ENCODE measurements at regions of chr11 and their contacts with region 1.

Region 1: GRCh38 chr11:61627567-61628445 is 46.9 kb upstream of the SYT7 start:
- DNase-seq: peak; percentile 81
- H3K4me3 Mint-ChIP-seq: no peak overlapping the region
- H3K27ac Mint-ChIP-seq: peak overlapping the region; percentile 54
- H3K4me1 Mint-ChIP-seq: peaks cover 25% of the 10 kb centered on the region
- H3K27me3 Mint-ChIP-seq: peaks cover 15% of the 10 kb centered on the region
- CTCF ChIP-seq: peak; percentile 80

Region 2: DNA sequence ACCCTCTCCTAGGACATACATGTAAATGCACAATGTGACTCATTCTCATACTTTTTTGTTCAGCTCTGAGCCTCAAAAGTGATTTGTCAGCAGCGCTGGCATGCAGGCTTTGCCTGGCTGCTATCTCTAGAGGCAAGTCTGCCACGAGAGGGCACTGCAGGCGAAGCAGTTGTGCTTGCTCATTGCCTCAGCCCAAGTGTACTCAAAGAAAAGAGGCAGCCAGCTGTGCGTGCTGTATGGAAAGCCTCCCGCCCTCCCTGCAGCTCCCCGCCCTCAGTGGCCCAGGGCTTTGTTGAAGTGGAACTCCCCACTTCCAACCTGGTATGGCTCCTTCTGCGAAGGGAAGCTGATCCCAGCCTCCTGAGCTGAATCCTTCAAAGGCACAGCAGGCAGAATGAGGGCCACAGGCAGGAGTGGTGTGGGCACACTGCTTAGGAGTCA is 181.6 kb before region 1 on chr11:
- CTCF ChIA-PET with region 1: interaction called, 3 read pairs
- intact Hi-C with region 1: loop called (anchors 2 kb)
- DNase-seq: peak; percentile 88
- H3K4me3 Mint-ChIP-seq: no peak overlapping the region
- H3K27ac Mint-ChIP-seq: no peak overlapping the region
- H3K4me1 Mint-ChIP-seq: no peaks in the 10 kb centered on the region
- H3K27me3 Mint-ChIP-seq: no peaks in the 10 kb centered on the region
- CTCF ChIP-seq: peak; percentile 89

Region 3: GRCh38 chr11:61477727-61478148 is 150.1 kb before region 1 on chr11:
- CTCF ChIA-PET with region 1: no interaction called
- intact Hi-C with region 1: loop called (anchors 1 kb)
- DNase-seq: peak; percentile 60
- H3K4me3 Mint-ChIP-seq: no peak overlapping the region
- H3K27ac Mint-ChIP-seq: no peak overlapping the region
- H3K4me1 Mint-ChIP-seq: peaks cover 21% of the 10 kb centered on the region
- H3K27me3 Mint-ChIP-seq: peaks cover under 1% of the 10 kb centered on the region
- CTCF ChIP-seq: peak; percentile 94

Region 4: GRCh38 chr11:61532139-61533038 is 95.4 kb before region 1 on chr11:
- CTCF ChIA-PET with region 1: no interaction called
- intact Hi-C with region 1: loop called (anchors 10 kb)
- DNase-seq: peak; percentile 63
- H3K4me3 Mint-ChIP-seq: no peak overlapping the region
- H3K27ac Mint-ChIP-seq: no peak overlapping the region
- H3K4me1 Mint-ChIP-seq: peaks cover 13% of the 10 kb centered on the region
- H3K27me3 Mint-ChIP-seq: peaks cover 55% of the 10 kb centered on the region
- CTCF ChIP-seq: peak; percentile 92

Region 5: GRCh38 chr11:61581931-61582330 is 45.9 kb before region 1 on chr11:
- CTCF ChIA-PET with region 1: no interaction called
- intact Hi-C with region 1: loop called (anchors 2 kb)
- DNase-seq: no peak
- H3K4me3 Mint-ChIP-seq: peak overlapping the region; percentile 70
- H3K27ac Mint-ChIP-seq: peak overlapping the region; percentile 50
- H3K4me1 Mint-ChIP-seq: peaks cover 12% of the 10 kb centered on the region
- H3K27me3 Mint-ChIP-seq: peaks cover 55% of the 10 kb centered on the region
- CTCF ChIP-seq: no peak

Region 6: GRCh38 chr11:61769169-61769920 is 141.5 kb after region 1 on chr11:
- CTCF ChIA-PET with region 1: no interaction called
- intact Hi-C with region 1: no loop called
- DNase-seq: peak; percentile 45
- H3K4me3 Mint-ChIP-seq: no peak overlapping the region
- H3K27ac Mint-ChIP-seq: no peak overlapping the region
- H3K4me1 Mint-ChIP-seq: no peaks in the 10 kb centered on the region
- H3K27me3 Mint-ChIP-seq: no peaks in the 10 kb centered on the region
- CTCF ChIP-seq: peak; percentile 29